ENCODE measurements at regions of chr7 and their contacts with region 1.

Region 1: DNA sequence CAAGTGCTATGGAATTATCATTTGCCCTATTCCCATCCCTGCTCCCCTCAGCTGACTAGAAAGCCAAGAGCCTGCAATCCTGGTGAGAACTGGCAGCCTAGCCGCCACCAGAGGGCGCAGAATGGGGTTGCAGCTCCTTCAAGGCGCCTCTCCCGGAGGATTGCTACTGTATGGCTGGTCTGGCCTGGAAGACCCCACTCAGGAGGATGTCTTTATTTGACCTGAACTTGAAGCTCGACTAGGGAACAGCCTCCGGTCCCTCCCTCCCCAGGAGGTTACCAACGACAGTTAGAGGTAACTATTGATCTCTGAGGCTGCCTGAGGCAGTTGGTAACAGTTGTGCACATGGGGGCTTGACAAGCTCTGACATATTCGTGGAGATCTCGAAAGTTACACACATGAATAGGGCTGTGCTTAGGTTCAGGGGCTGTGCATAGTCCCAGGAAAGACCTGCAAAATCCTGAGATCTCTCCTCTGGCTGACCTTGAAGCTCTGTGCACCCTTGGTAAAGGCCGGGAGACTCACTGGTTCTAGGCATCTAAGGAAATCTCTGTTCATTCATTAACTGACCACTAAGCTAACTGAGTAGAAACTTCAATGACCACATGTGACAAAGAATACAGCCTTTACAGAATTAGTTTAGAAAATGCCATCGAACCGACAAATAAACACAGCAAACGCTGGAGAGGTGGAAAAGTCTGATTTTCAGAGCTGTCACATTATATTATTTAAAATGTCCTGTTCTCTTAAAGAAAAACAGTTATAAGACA is 65.7 kb downstream of the TSPAN12 start:
- DNase-seq: peak; percentile 6 to 63 (median 21)
- ATAC-seq: peak; percentile 77
- H3K4me3 ChIP-seq: no peak overlapping the region
- H3K4me3 Mint-ChIP-seq: no peak overlapping the region
- H3K27ac ChIP-seq: no peak overlapping the region
- H3K27ac Mint-ChIP-seq: no peak overlapping the region
- H3K4me1 ChIP-seq: no peaks in the 10 kb centered on the region
- H3K4me1 Mint-ChIP-seq: no peaks in the 10 kb centered on the region
- H3K27me3 ChIP-seq: no peaks in the 10 kb centered on the region
- H3K27me3 Mint-ChIP-seq: peaks cover 0 to 10% (median 5%) of the 10 kb centered on the region in 5 donors

Region 2: DNA sequence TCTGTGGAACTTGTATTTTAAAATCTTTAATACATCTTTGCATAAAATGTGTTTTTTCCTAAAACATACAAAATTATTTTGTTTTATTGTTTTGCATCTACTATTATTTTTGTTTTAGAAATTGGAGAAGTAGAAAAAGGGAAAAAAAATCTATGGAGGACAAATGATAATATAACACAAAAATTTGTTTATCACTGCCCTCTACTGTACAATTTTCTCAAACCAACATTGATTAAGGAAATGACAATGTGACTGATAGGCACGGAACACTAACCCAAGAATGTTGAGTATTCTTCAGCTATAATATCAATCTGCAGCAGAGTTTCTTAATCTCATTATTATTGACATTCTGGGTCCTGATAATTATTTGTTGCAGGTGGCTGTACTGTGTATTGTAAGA is 148.8 kb after region 1 on chr7:
- CTCF ChIA-PET with region 1: interaction called, 3 read pairs
- POLR2A ChIA-PET with region 1: no interaction called
- intact Hi-C with region 1: loop called (anchors 1 to 2 kb)
- DNase-seq: no peak
- ATAC-seq: peak; percentile 47
- H3K4me3 ChIP-seq: no peak overlapping the region
- H3K4me3 Mint-ChIP-seq: no peak overlapping the region
- H3K27ac ChIP-seq: no peak overlapping the region
- H3K27ac Mint-ChIP-seq: no peak overlapping the region
- H3K4me1 ChIP-seq: no peaks in the 10 kb centered on the region
- H3K4me1 Mint-ChIP-seq: no peaks in the 10 kb centered on the region
- H3K27me3 ChIP-seq: no peaks in the 10 kb centered on the region
- H3K27me3 Mint-ChIP-seq: peaks cover under 1 to 28% (median 9%) of the 10 kb centered on the region in 5 donors

Region 3: GRCh38 chr7:121081327-121081936 is 289.2 kb after region 1 on chr7:
- CTCF ChIA-PET with region 1: no interaction called
- POLR2A ChIA-PET with region 1: no interaction called
- intact Hi-C with region 1: loop called (anchors 1 kb)
- DNase-seq: peak in 7 of 9 donors; percentile 19 to 63 (median 47)
- ATAC-seq: peak; percentile 88
- H3K4me3 ChIP-seq: no peak overlapping the region
- H3K4me3 Mint-ChIP-seq: no peak overlapping the region
- H3K27ac ChIP-seq: no peak overlapping the region
- H3K27ac Mint-ChIP-seq: no peak overlapping the region
- H3K4me1 ChIP-seq: no peaks in the 10 kb centered on the region
- H3K4me1 Mint-ChIP-seq: no peaks in the 10 kb centered on the region
- H3K27me3 ChIP-seq: no peaks in the 10 kb centered on the region
- H3K27me3 Mint-ChIP-seq: peaks cover 5 to 26% (median 12%) of the 10 kb centered on the region in 5 donors

Region 4: GRCh38 chr7:121107923-121108498 is 315.7 kb after region 1 on chr7:
- CTCF ChIA-PET with region 1: interaction called, 3 read pairs
- POLR2A ChIA-PET with region 1: no interaction called
- intact Hi-C with region 1: loop called in 1 of 2 experiments (anchors 1 kb)
- DNase-seq: peak in 7 of 9 donors; percentile 26 to 59 (median 54)
- ATAC-seq: peak; percentile 83
- H3K4me3 ChIP-seq: no peak overlapping the region
- H3K4me3 Mint-ChIP-seq: no peak overlapping the region
- H3K27ac ChIP-seq: no peak overlapping the region
- H3K27ac Mint-ChIP-seq: no peak overlapping the region
- H3K4me1 ChIP-seq: no peaks in the 10 kb centered on the region
- H3K4me1 Mint-ChIP-seq: no peaks in the 10 kb centered on the region
- H3K27me3 ChIP-seq: no peaks in the 10 kb centered on the region
- H3K27me3 Mint-ChIP-seq: peaks cover 0 to 27% (median 5%) of the 10 kb centered on the region in 5 donors

Region 5: GRCh38 chr7:121994625-121995410 is 1202.5 kb after region 1 on chr7:
- CTCF ChIA-PET with region 1: no interaction called
- POLR2A ChIA-PET with region 1: no interaction called
- intact Hi-C with region 1: loop called in 1 of 2 experiments (anchors 2 kb)
- DNase-seq: peak in 2 of 9 donors; percentile 5 to 36
- ATAC-seq: peak; percentile 68
- H3K4me3 ChIP-seq: no peak overlapping the region
- H3K4me3 Mint-ChIP-seq: no peak overlapping the region
- H3K27ac ChIP-seq: no peak overlapping the region
- H3K27ac Mint-ChIP-seq: no peak overlapping the region
- H3K4me1 ChIP-seq: no peaks in the 10 kb centered on the region
- H3K4me1 Mint-ChIP-seq: peaks cover 0 to 2% (median 0%) of the 10 kb centered on the region in 7 donors
- H3K27me3 ChIP-seq: no peaks in the 10 kb centered on the region
- H3K27me3 Mint-ChIP-seq: peaks cover 0 to 4% (median 0%) of the 10 kb centered on the region in 5 donors